Right ventricle myocardium inferior (tissue), 1 donor: ENCODE measurements at regions of chr12 and their contacts with region 1.

Region 1: GRCh38 chr12:108193917-108194316 is 64.8 kb downstream of the WSCD2 start:
- DNase-seq: no peak
- ATAC-seq: no peak

Region 2: DNA sequence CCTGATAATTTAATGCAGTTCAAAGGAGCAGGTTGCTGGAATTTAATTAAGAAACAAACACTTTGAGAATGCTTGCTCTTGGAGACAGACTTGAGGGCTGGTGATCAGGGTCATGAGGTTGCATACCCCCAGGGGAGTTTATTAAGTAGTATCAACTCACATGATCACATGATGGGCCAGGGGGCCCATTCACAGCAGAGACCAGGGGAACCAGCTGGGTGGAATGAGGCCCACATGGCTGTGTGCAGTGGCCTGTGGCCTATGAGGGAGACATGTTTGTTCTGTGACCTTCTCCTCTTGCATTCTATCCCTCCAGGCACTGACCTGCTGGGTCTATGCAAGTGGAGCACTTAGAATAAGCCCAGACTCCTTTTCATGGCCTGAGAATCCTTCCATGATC is 774.9 kb before region 1 on chr12:
- intact Hi-C with region 1: no loop called
- DNase-seq: no peak
- ATAC-seq: no peak

Region 3: DNA sequence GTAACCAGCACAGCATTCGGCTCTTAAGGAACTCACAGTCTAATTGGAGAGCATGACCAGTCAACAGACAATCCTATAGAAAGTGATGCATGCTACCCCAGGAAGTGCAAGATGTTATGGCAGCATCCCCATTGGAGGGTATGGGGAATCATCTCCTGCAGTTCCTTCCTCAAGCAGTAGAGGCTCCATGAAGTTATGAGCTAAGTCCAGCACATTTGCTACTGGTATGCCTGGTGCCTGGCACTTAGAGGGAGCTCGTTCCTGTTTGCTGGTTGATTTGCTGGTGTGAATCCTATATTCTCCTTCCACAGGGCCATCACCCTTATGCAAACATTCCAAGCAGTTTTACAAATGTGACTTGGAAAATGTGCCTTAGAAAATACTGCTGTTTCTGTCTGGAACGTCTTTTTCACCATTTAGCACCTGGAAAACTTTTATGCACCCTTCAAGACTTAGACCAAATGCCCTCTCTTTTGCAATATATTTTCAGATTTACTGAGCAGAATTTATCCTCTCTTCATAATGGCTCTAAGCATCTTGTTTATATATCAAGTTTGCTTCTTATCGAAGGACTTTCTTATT is 201.0 kb before region 1 on chr12:
- intact Hi-C with region 1: loop called (anchors 5 kb)
- DNase-seq: no peak
- ATAC-seq: no peak

Region 4: GRCh38 chr12:108099073-108099472 is 94.8 kb before region 1 on chr12:
- intact Hi-C with region 1: loop called (anchors 2 kb)
- DNase-seq: no peak
- ATAC-seq: no peak

Region 5: GRCh38 chr12:108112832-108113556 is 80.9 kb before region 1 on chr12:
- intact Hi-C with region 1: loop called (anchors 5 kb)
- DNase-seq: no peak
- ATAC-seq: peak; percentile 85

Region 6: GRCh38 chr12:108129017-108129812 is 64.7 kb before region 1 on chr12 and contains the start of gene WSCD2:
- intact Hi-C with region 1: loop called (anchors 2 kb)
- DNase-seq: no peak
- ATAC-seq: peak; percentile 47
- total RNA-seq, gene WSCD2: 0.73 TPM